ENCODE measurements at regions of chr13 and their contacts with region 1.

Region 1: DNA sequence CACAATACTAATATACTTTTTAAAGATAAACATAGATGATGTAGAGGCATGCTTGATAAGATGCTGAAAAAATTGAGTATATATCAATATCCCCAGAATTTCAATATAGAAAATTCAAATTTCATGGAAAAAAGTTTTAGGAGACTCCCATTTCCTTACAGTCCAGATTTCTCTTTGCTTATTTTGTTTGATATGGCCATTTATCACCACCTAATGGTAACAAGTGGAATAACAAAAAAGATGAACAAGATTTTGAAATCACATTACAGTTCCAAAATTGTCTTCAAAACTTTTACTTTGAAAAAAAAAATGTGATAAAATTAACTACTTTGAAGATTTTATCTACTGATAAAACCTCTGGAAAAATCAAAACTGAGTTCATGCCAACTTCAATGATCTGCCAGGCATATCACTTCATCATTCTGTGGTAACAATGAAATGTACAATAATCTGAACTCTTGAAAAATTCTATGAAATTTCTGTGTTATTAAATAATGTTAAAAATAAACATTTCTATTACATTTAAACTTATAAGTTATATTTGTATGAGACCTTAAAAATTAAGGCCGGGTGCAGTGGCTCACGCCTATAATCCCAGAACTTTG is 17.5 kb downstream of the MIPEP start:
- DNase-seq: no peak

Region 2: DNA sequence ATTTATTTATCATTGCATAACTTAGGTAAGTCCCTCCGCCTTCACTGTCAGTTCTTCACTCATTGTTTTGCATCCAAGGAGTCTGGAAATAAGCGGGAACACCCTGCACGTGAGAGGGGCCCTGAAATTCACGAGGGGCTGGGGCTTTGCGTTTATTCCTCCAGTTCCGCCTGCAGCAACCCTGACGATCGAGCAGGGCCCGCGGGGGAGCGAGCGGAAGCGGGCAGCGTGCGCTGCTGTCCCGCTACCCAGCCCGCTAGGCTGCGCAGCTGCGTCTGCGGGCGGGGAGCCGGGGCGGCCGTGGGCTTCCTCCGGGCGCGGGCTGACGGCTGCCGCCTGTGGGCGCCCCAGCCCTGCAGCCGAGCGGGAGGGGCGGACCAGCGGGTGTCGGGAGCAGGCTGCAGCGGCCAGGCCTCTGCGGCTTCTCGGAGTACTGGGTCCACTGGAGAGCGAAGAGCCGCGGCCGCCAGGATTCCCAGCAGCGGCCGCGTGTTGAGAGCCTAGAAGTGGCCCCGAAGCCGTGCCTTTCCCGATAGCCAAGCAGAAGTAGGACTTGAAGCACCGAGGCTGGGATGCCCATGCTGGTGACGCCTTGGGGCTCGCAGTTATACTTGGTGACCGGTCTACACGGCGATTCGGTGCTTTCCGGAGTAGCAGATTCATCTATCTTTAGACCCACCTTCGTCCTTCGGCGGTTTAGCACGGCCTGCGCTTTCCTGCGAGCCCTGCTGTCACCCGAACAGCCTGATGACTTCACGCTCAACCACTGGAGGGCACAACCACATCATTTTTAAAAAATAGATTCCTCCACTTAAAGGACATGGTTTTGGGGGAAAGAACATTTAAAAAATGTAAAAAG is 405.3 kb before region 1 on chr13:
- intact Hi-C with region 1: loop called (anchors 5 kb)
- DNase-seq: peak; percentile 86

Region 3: GRCh38 chr13:23579072-23579895 is 292.4 kb before region 1 on chr13:
- intact Hi-C with region 1: loop called in 1 of 2 experiments (anchors 10 kb)
- DNase-seq: peak; percentile 98

Region 4: GRCh38 chr13:23766283-23766682 is 105.4 kb before region 1 on chr13:
- intact Hi-C with region 1: no loop called
- DNase-seq: no peak